ENCODE measurements at regions of chr4 and their contacts with region 1.

Region 1: DNA sequence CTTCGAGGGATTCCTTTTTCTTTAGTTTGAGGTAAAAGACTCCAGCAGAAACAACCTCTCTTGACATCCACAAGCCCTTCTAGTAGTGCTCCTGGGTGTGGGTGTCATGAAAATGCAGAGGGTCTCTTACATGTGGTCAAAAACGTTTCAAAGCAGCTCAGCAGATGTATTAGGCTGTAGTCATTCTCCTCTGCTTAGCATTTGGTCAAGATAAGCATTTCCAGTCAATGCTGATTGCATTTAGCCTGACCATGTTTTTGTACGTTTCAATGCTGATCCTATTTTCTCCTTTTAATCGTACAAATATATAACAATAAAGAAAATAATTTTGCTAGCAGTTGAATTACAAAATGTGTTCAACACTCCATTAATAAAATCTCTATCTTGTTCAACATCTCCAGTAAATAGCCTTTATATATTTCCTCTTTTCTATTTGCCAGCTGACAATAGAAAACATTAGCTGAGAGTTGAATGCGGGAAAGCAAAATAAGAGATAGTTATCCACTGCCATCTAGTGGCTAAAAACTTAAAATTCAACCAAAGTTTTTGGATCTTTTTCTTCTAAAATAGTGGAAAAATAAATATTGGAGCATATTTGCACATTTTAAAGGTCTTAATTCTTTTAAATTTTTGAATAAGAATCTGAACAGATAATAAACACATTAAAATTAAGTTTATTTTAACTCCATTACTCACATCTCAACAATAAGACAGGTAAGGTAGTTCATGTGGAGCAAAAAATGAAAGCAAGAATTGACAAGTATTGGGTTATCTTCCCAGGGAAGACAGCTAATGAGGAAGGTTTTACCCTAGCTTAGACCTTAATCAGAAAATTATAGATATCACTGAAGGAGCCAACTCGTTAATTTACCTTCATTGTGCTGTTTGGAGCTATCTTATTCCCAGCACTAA is 15.2 kb upstream of the PACRGL start:
- DNase-seq: peak; percentile 14 to 43 (median 24)
- H3K4me3 ChIP-seq: no peak overlapping the region
- H3K4me3 Mint-ChIP-seq: no peak overlapping the region
- H3K27ac ChIP-seq: no peak overlapping the region
- H3K27ac Mint-ChIP-seq: no peak overlapping the region
- H3K4me1 ChIP-seq: no peaks in the 10 kb centered on the region
- H3K4me1 Mint-ChIP-seq: no peaks in the 10 kb centered on the region
- H3K27me3 ChIP-seq: no peaks in the 10 kb centered on the region
- H3K27me3 Mint-ChIP-seq: peaks cover 1 to 5% (median 1%) of the 10 kb centered on the region in 3 donors
- CTCF ChIP-seq: peak; percentile 81

Region 2: DNA sequence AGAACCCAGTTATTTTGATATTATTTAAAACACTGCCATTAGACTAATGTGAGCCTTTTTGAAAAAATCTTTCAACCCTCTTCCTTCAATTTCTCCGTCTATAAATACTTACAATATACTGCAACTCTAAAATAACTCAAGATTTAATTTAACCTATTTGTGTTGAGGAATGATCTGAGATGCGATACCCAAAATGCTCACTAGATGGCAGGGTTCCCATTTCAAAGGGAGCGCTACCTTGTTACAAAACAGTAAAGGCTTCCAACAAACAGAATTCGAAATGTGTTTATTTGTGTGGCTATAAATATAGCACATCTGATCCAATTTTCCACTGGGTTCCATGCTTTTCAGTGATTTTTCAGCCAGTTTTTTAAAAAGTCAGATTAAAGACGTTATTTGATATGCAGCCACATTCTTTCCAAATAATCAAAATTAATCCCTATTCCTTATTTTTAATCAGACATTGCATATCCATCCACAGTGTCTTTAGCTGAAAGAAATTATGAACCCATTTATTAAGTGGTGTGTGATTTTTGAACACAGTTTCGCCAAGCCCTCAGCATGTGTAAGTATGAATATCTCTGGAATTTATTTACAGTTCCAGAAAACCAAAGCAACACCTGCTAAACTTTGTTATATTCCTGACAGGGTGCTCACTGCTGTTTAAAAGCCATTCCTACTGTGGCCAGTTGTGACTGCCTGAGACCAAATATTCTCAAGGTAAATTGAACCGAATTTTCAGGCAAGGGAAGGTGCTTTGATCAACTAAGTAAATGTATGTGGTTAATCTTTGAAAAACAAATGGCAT is 1995.6 kb before region 1 on chr4:
- intact Hi-C with region 1: loop called in 1 of 2 experiments (anchors 10 kb)
- DNase-seq: peak in 1 of 3 donors; percentile 0
- H3K4me3 ChIP-seq: no peak overlapping the region
- H3K4me3 Mint-ChIP-seq: no peak overlapping the region
- H3K27ac ChIP-seq: no peak overlapping the region
- H3K27ac Mint-ChIP-seq: no peak overlapping the region
- H3K4me1 ChIP-seq: no peaks in the 10 kb centered on the region
- H3K4me1 Mint-ChIP-seq: no peaks in the 10 kb centered on the region
- H3K27me3 ChIP-seq: no peaks in the 10 kb centered on the region
- H3K27me3 Mint-ChIP-seq: peaks cover 2 to 6% (median 2%) of the 10 kb centered on the region in 3 donors
- CTCF ChIP-seq: peak; percentile 91

Region 3: DNA sequence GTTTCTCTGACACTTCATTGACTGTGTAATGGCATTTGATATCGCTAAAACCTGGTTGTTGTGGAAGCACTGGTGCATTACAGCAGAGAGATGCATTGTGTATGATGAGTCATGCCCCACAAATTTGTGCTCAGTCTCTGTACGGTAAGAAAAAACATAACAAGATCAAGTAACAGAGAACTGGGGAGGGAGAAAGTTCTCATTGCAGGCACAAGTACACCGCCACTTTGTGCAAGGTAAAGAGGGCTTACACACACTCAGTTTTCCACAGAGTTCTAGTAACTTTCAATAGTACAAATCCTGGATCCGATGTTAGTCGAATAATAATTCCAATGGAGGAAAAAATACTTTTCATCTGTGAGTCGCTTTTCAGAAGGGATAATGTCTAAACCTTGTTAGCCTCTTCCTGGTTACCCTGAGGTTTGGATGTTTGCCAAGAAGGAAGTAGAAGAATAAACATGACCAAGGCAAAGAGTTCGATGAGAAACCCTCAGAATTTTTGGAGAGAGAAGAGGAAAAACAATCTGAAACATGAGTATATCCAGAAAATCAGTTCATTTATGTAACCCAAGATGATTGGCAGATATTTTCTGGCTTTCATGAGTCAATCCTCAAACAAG is 945.9 kb before region 1 on chr4:
- intact Hi-C with region 1: no loop called
- DNase-seq: no peak
- H3K4me3 ChIP-seq: no peak overlapping the region
- H3K4me3 Mint-ChIP-seq: no peak overlapping the region
- H3K27ac ChIP-seq: no peak overlapping the region
- H3K27ac Mint-ChIP-seq: no peak overlapping the region
- H3K4me1 ChIP-seq: no peaks in the 10 kb centered on the region
- H3K4me1 Mint-ChIP-seq: no peaks in the 10 kb centered on the region
- H3K27me3 ChIP-seq: no peaks in the 10 kb centered on the region
- H3K27me3 Mint-ChIP-seq: peaks cover 0 to 2% (median 0%) of the 10 kb centered on the region in 3 donors
- CTCF ChIP-seq: no peak

Region 4: DNA sequence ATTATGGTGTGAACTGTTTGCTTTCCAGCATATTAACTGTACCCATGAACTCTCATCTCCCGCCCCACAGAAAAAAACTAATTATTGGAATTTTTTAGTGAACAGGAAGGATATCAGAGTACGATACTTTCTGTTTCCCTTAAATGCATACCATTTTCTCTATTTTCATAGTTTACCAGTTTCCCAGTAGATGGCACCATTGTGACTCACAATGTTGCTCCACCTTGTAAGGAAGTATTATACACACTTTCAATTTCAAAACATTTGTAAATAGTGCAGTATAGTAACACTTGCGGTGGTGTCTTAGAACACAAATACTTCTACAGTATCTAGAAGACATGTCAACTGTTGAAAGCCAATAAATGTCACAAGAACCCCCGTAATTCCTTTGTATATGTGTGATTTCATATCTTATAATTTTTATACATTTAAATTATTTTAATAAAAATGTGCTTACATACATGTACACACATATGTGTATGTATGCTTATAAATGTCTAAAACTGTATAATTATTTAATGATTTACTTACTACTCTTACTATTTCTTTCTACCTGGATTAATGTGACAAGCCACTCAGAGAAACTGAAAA is 266.2 kb before region 1 on chr4:
- intact Hi-C with region 1: loop called (anchors 2 to 5 kb)
- DNase-seq: peak; percentile 42 to 67 (median 66)
- H3K4me3 ChIP-seq: peak overlapping the region in 1 of 3 experiments; percentile 53
- H3K4me3 Mint-ChIP-seq: peak overlapping the region; percentile 28 to 63
- H3K27ac ChIP-seq: peak overlapping the region in 1 of 2 donors; percentile 22
- H3K27ac Mint-ChIP-seq: no peak overlapping the region
- H3K4me1 ChIP-seq: peaks cover 0 to 4% of the 10 kb centered on the region in 2 donors
- H3K4me1 Mint-ChIP-seq: peaks cover 6% of the 10 kb centered on the region
- H3K27me3 ChIP-seq: no peaks in the 10 kb centered on the region
- H3K27me3 Mint-ChIP-seq: peaks cover 4 to 5% (median 4%) of the 10 kb centered on the region in 3 donors
- CTCF ChIP-seq: peak; percentile 66

Region 5: GRCh38 chr4:20723019-20723418 is 37.9 kb after region 1 on chr4:
- intact Hi-C with region 1: no loop called
- DNase-seq: no peak
- H3K4me3 ChIP-seq: no peak overlapping the region
- H3K4me3 Mint-ChIP-seq: no peak overlapping the region
- H3K27ac ChIP-seq: no peak overlapping the region
- H3K27ac Mint-ChIP-seq: no peak overlapping the region
- H3K4me1 ChIP-seq: no peaks in the 10 kb centered on the region
- H3K4me1 Mint-ChIP-seq: no peaks in the 10 kb centered on the region
- H3K27me3 ChIP-seq: no peaks in the 10 kb centered on the region
- H3K27me3 Mint-ChIP-seq: no peaks in the 10 kb centered on the region
- CTCF ChIP-seq: no peak

Region 6: DNA sequence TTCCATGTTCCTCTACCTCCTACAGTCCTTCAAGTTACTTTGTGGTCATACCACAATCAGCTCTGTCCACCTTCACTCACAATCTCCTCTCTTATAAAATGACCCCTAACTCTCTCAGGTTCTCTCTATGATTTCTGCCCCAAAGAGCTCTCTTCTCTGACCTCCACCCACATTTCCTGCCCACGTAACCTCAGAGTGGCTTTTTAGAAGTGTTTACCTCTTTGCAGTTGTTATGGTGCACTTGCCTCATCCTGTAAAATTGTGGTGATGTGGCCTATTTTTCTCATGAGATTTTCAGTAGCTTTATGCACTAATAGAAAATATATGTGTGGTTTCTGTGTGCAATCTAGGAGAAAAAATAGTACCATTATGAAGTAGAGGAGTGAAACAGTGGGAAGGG is 231.0 kb after region 1 on chr4:
- intact Hi-C with region 1: no loop called
- DNase-seq: no peak
- H3K4me3 ChIP-seq: no peak overlapping the region
- H3K4me3 Mint-ChIP-seq: no peak overlapping the region
- H3K27ac ChIP-seq: no peak overlapping the region
- H3K27ac Mint-ChIP-seq: no peak overlapping the region
- H3K4me1 ChIP-seq: no peaks in the 10 kb centered on the region
- H3K4me1 Mint-ChIP-seq: no peaks in the 10 kb centered on the region
- H3K27me3 ChIP-seq: no peaks in the 10 kb centered on the region
- H3K27me3 Mint-ChIP-seq: no peaks in the 10 kb centered on the region
- CTCF ChIP-seq: no peak